CD4-positive, alpha-beta T cell (primary cell): ENCODE measurements at regions of chr3 and their contacts with region 1.

Region 1: DNA sequence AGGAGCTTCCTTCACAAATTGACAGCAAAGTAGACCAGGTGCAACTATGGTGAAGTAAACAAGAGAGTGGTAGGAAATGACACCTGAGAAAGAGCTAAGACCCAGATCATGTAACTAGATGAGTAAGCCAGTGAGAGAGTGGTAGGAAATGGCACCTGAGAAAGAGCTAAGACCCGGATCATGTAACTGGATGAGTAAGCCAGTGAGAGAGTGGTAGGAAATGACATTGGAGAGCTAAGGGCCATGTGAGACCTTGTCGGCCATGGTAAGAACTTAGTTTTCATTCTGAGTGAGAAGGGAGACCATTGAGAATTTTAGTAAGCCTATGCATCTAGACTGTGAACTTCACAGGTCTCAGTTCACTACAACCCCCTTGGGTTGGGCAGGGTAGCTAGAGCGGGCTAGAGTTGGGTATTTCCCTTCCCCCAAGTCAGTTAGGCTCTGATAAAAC is 5.4 kb upstream of the SENP7 start:
- DNase-seq: peak in 12 of 14 experiments; percentile 15 to 90 (median 36)
- ATAC-seq: peak; percentile 82
- H3K4me3 ChIP-seq: peak overlapping the region; percentile 20
- H3K4me3 Mint-ChIP-seq: peak overlapping the region; percentile 46
- H3K27ac ChIP-seq: peak overlapping the region; percentile 82 to 94
- H3K27ac Mint-ChIP-seq: peak overlapping the region; percentile 97
- H3K4me1 ChIP-seq: peaks cover 50% of the 10 kb centered on the region
- H3K4me1 Mint-ChIP-seq: peaks cover 58% of the 10 kb centered on the region
- H3K27me3 ChIP-seq: no peaks in the 10 kb centered on the region
- H3K27me3 Mint-ChIP-seq: no peaks in the 10 kb centered on the region
- CTCF ChIP-seq: no peak

Region 2: GRCh38 chr3:101381809-101382208 is 136.6 kb before region 1 on chr3:
- CTCF ChIA-PET with region 1: interaction called, 3 read pairs
- POLR2A ChIA-PET with region 1: interaction called, 3 read pairs
- intact Hi-C with region 1: loop called in 1 of 2 experiments (anchors 5 kb)
- DNase-seq: peak in 3 of 14 experiments; percentile 55 to 64 (median 56)
- ATAC-seq: peak; percentile 59
- H3K4me3 ChIP-seq: no peak overlapping the region
- H3K4me3 Mint-ChIP-seq: no peak overlapping the region
- H3K27ac ChIP-seq: no peak overlapping the region
- H3K27ac Mint-ChIP-seq: peak overlapping the region; percentile 45
- H3K4me1 ChIP-seq: peaks cover 11% of the 10 kb centered on the region
- H3K4me1 Mint-ChIP-seq: peaks cover 75% of the 10 kb centered on the region
- H3K27me3 ChIP-seq: no peaks in the 10 kb centered on the region
- H3K27me3 Mint-ChIP-seq: no peaks in the 10 kb centered on the region
- CTCF ChIP-seq: peak; percentile 34

Region 3: DNA sequence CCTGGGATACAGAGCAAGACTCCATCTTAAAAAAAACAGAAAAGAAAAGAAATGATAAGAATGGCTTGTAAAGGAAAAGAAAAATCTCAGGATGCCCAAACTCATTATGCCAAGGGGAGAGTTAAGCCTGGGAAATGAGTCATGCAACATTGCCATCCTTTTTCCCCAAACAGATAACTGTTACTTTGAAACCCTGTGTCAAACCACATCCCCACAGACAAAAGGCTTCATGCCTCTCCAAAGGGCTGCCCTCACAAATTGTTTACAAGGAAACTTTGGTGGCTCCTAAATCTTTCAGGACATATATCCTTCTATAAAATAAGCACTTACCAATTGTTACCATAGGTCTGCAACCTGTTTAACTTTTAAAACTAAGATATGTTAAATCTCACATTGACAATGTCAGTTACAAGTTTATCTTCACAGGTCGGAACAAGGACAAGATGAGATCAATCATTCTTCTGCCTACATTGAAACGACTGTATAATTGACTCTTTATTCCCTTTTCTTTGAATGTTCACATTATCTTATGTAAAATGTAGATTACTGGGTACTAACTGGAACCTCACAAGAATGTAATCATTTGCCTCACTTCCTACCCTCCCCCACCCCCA is 13.1 kb after region 1 on chr3:
- CTCF ChIA-PET with region 1: interaction called, 5 read pairs
- POLR2A ChIA-PET with region 1: interaction called, 72 read pairs
- intact Hi-C with region 1: loop called in 1 of 2 experiments (anchors 1 kb)
- DNase-seq: peak in 3 of 14 experiments; percentile 39 to 56 (median 49)
- ATAC-seq: peak; percentile 71
- H3K4me3 ChIP-seq: no peak overlapping the region
- H3K4me3 Mint-ChIP-seq: peak overlapping the region; percentile 4
- H3K27ac ChIP-seq: peak overlapping the region in 1 of 2 donors; percentile 61
- H3K27ac Mint-ChIP-seq: peak overlapping the region; percentile 85
- H3K4me1 ChIP-seq: peaks cover 22% of the 10 kb centered on the region
- H3K4me1 Mint-ChIP-seq: peaks cover 52% of the 10 kb centered on the region
- H3K27me3 ChIP-seq: no peaks in the 10 kb centered on the region
- H3K27me3 Mint-ChIP-seq: no peaks in the 10 kb centered on the region
- CTCF ChIP-seq: no peak

Region 4: DNA sequence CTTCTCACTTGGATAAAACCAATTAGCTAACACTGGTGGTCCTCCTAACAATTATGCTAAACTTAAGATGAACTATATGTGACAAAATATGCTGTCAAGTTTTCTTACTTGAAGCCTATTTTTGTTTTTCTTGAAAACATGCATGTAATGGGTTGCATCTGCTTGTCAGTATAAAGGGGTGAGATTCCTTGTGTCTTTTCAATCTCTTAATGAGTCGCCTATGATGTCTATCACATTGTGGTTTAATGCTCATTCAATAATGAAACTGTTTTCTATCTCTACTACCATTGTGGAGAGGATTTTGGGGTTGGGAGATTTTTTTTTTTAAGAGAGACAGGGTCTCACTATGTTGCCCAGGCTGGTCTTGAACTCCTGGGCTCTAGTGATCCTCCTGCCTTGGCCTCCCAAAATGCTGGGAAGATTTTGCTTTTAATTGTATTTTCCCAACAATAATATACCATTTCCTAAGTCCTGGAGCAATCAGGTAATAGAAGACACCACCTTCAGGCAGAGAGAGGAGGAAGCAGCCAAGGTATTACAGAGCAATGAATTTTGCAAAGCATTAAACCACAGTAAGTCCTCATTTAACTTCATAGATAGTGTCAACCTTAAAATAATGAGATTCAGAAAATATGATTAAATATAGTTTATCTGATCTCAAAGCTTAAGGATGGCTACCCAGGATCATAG is 25.9 kb after region 1 on chr3:
- CTCF ChIA-PET with region 1: interaction called, 10 read pairs
- POLR2A ChIA-PET with region 1: interaction called, 39 read pairs
- intact Hi-C with region 1: no loop called
- DNase-seq: peak in 1 of 14 experiments; percentile 20
- ATAC-seq: peak; percentile 53
- H3K4me3 ChIP-seq: no peak overlapping the region
- H3K4me3 Mint-ChIP-seq: peak overlapping the region; percentile 38
- H3K27ac ChIP-seq: peak overlapping the region in 1 of 2 donors; percentile 35
- H3K27ac Mint-ChIP-seq: peak overlapping the region; percentile 93
- H3K4me1 ChIP-seq: peaks cover 19% of the 10 kb centered on the region
- H3K4me1 Mint-ChIP-seq: peaks cover 47% of the 10 kb centered on the region
- H3K27me3 ChIP-seq: no peaks in the 10 kb centered on the region
- H3K27me3 Mint-ChIP-seq: no peaks in the 10 kb centered on the region
- CTCF ChIP-seq: peak; percentile 50

Region 5: DNA sequence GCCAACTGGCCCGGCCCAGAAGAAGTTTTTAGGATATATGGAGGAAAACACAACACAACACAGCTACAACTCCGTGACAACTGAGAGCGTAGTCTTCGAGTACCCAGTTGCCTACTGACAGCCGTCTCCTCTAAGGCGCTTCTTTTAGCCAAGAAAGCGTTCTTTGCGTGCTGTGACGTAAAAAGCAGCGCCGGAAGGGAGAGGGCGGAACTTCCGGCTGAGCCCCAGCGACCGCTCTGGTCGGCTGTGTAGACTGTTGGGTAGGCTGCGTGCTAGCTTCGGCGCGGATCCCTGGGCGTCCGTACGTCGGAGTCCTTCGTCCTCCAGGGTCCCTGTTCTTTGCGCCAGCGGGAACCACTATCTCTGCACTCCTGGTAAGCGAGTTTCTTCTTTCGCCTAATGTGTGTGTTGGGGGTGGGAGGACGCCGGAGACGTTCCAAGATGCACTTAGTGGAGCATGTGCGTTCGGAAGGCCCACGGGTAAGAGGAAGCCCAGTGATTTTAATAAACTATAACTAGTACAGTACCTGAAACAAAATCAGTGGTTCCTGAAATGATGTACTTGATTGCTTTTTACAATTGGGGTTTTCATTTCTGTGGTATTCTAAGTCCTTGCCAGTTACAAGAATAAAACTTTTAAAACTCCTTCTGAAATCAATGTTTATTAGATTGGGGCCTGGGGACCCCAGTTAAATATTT is 43.3 kb after region 1 on chr3 and contains the start of gene TRMT10C:
- CTCF ChIA-PET with region 1: no interaction called
- POLR2A ChIA-PET with region 1: interaction called, 32 read pairs
- intact Hi-C with region 1: loop called (anchors 1 to 2 kb)
- DNase-seq: peak; percentile 87 to 97 (median 91)
- ATAC-seq: peak; percentile 94
- H3K4me3 ChIP-seq: peak within 1 kb of the TSS; percentile 93
- H3K4me3 Mint-ChIP-seq: peak within 1 kb of the TSS; percentile 97
- H3K27ac ChIP-seq: peak within 1 kb of the TSS; percentile 81 to 89
- H3K27ac Mint-ChIP-seq: peak within 1 kb of the TSS; percentile 99
- H3K4me1 ChIP-seq: peaks cover 14% of the 10 kb centered on the region
- H3K4me1 Mint-ChIP-seq: peaks cover 50% of the 10 kb centered on the region
- H3K27me3 ChIP-seq: peaks cover 0 to 2% of the 10 kb centered on the region in 2 experiments
- H3K27me3 Mint-ChIP-seq: peaks cover under 1% of the 10 kb centered on the region
- CTCF ChIP-seq: no peak
- total RNA-seq, gene TRMT10C: 49.4 to 51.2 TPM

Region 6: DNA sequence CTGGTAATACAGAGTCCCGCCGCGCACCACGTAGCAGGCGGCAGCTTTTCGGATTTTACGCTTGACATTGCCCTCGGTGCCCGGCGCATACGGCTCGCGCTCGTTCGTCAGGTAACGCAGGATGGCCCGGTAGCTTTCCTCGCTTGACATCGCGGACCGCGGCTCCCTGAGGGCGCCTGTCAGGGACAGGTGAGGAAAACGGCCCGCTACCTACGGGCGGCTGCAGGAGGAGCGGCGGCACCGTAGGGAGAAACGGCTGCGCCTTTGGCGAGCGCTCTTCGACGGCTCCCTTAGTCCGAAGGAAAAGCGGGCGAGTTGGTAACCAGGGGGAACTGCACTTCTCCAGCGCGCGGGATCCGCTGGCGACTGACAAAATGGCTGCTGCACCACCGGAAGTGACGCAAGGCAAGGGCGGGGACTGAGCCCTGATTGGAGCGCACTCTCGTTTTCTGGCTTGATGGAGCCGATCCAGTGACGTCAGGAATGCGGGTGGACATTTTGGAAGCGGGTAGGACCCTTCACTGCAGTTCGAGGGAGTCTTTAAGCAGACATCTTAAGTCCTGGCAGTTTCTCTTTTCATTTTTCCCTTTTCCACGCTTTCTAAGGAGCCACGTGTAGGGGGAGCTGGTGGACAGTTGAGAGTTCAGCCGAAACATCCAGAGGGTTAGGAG is 158.5 kb after region 1 on chr3 and contains the start of gene ZBTB11:
- CTCF ChIA-PET with region 1: interaction called, 3 read pairs
- POLR2A ChIA-PET with region 1: interaction called, 16 read pairs
- intact Hi-C with region 1: no loop called
- DNase-seq: peak; percentile 99 to 100 (median 100)
- ATAC-seq: peak; percentile 67
- H3K4me3 ChIP-seq: peak within 1 kb of the TSS; percentile 71
- H3K4me3 Mint-ChIP-seq: peak within 1 kb of the TSS; percentile 98
- H3K27ac ChIP-seq: peak within 1 kb of the TSS; percentile 97 to 99
- H3K27ac Mint-ChIP-seq: peak within 1 kb of the TSS; percentile 100
- H3K4me1 ChIP-seq: peaks cover 36% of the 10 kb centered on the region
- H3K4me1 Mint-ChIP-seq: peaks cover 60% of the 10 kb centered on the region
- H3K27me3 ChIP-seq: no peaks in the 10 kb centered on the region
- H3K27me3 Mint-ChIP-seq: peaks cover 3% of the 10 kb centered on the region
- CTCF ChIP-seq: no peak
- total RNA-seq, gene ZBTB11: 73.5 to 76.6 TPM